Vagina (tissue), 2 donors: ENCODE measurements at regions of chr6 and their contacts with region 1.

Region 1: GRCh38 chr6:81214414-81215091 is 537.9 kb downstream of the TENT5A start:
- DNase-seq: no peak
- H3K4me3 ChIP-seq: no peak overlapping the region
- H3K27ac ChIP-seq: no peak overlapping the region
- H3K4me1 ChIP-seq: no peaks in the 10 kb centered on the region
- H3K27me3 ChIP-seq: no peaks in the 10 kb centered on the region
- CTCF ChIP-seq: no peak
- POLR2A ChIP-seq: no peak

Region 2: GRCh38 chr6:82971877-82972460 is 1757.4 kb after region 1 on chr6:
- intact Hi-C with region 1: loop called (anchors 5 kb)
- DNase-seq: no peak
- H3K4me3 ChIP-seq: no peak overlapping the region
- H3K27ac ChIP-seq: no peak overlapping the region
- H3K4me1 ChIP-seq: no peaks in the 10 kb centered on the region
- H3K27me3 ChIP-seq: no peaks in the 10 kb centered on the region
- CTCF ChIP-seq: no peak
- POLR2A ChIP-seq: no peak